Activated CD8-positive, alpha-beta T cell treated with anti-CD3 and anti-CD28 coated beads, Interleukin-2, amount 10 ng/mL, durations not matched to agents 7 days and 5 days (primary cell): ENCODE measurements at regions of chr20 and their contacts with region 1.

Region 1: DNA sequence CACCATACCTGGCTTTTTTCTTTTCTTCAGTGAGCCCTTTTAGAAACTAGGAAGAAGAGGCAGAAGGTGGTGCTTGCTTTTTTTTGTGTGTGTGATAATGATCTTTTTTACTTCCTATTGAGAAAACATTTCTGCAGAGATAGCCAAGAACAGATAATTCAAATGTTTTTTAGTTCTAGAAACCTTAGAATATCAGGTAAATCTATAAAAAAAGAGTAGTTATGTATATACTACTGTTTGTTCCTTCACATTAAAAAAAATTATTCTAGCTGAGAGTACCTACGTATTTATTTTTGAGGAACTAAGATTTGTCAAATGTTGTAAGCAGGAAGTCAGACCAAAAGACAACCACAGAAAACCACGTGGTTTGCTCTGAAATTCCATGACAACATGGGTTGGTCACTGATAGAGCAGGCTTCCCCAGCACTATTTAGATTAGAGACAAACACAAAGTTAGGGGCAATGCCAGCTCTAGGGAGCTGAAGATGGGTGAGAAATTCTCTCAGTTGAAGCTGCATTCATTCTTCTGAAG is 12.8 kb downstream of the STK4 start:
- DNase-seq: peak; percentile 88
- ATAC-seq: peak; percentile 82
- H3K4me3 Mint-ChIP-seq: peak overlapping the region; percentile 74
- H3K27ac Mint-ChIP-seq: peak overlapping the region; percentile 97
- H3K4me1 Mint-ChIP-seq: peaks cover 70% of the 10 kb centered on the region
- H3K27me3 Mint-ChIP-seq: no peaks in the 10 kb centered on the region

Region 2: GRCh38 chr20:44829688-44830087 is 149.5 kb before region 1 on chr20:
- CTCF ChIA-PET with region 1: no interaction called
- POLR2A ChIA-PET with region 1: no interaction called
- DNase-seq: no peak
- ATAC-seq: no peak
- H3K4me3 Mint-ChIP-seq: no peak overlapping the region
- H3K27ac Mint-ChIP-seq: no peak overlapping the region
- H3K4me1 Mint-ChIP-seq: no peaks in the 10 kb centered on the region
- H3K27me3 Mint-ChIP-seq: peaks cover 27% of the 10 kb centered on the region

Region 3: GRCh38 chr20:44942264-44942973 is 36.7 kb before region 1 on chr20:
- CTCF ChIA-PET with region 1: no interaction called
- POLR2A ChIA-PET with region 1: no interaction called
- DNase-seq: no peak
- ATAC-seq: no peak
- H3K4me3 Mint-ChIP-seq: no peak overlapping the region
- H3K27ac Mint-ChIP-seq: no peak overlapping the region
- H3K4me1 Mint-ChIP-seq: peaks cover 1% of the 10 kb centered on the region
- H3K27me3 Mint-ChIP-seq: no peaks in the 10 kb centered on the region

Region 4: DNA sequence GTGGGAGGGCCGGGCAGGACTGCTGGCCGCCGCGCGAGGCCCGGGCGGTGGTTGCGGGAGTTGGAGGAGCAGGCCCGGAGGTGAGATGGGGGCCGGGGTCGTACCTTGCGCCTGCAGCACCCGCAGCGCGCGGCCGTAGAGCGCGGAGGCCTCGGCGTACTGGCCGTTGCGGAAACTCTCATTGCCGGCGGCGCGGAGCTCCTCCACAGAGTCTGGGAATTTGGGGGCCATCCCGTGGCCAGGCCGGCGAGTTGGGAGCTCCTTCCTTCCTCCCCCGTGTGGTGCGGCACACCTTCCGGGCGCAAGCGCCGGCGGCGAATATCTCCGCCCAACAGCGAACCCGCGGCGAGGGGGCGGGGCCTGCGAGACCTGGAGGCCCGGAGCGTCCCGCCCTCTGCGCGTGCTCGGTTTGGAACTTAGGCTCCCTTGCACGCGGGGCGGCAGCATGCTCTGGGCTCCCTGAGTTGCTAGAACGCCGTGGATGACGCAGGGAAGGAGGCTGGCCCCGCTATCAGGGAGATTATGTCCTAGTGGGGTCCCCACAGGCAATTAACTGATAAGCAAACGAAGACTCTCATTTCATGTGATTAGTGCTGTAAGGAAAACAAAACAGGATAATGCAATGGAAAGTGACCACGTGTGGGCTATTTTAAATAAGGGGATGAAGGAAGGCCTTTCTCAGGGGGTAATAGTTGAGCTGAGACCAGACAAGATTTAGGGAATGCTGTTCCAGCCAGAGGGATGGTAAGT is 18.9 kb before region 1 on chr20 and contains the start of gene TOMM34:
- CTCF ChIA-PET with region 1: interaction called, 30 read pairs
- POLR2A ChIA-PET with region 1: interaction called, 14 read pairs
- DNase-seq: peak; percentile 96
- ATAC-seq: peak; percentile 97
- H3K4me3 Mint-ChIP-seq: peak within 1 kb of the TSS; percentile 86
- H3K27ac Mint-ChIP-seq: peak within 1 kb of the TSS; percentile 84
- H3K4me1 Mint-ChIP-seq: peaks cover 71% of the 10 kb centered on the region
- H3K27me3 Mint-ChIP-seq: no peaks in the 10 kb centered on the region
- total RNA-seq, gene TOMM34: 20.2 to 20.3 TPM

Region 5: GRCh38 chr20:44966030-44966961 is 12.9 kb before region 1 on chr20 and contains the start of gene STK4:
- CTCF ChIA-PET with region 1: interaction called, 30 read pairs
- POLR2A ChIA-PET with region 1: interaction called, 46 read pairs
- DNase-seq: peak; percentile 95
- ATAC-seq: peak; percentile 80
- H3K4me3 Mint-ChIP-seq: peak within 1 kb of the TSS; percentile 87
- H3K27ac Mint-ChIP-seq: peak within 1 kb of the TSS; percentile 88
- H3K4me1 Mint-ChIP-seq: peaks cover 67% of the 10 kb centered on the region
- H3K27me3 Mint-ChIP-seq: no peaks in the 10 kb centered on the region
- total RNA-seq, gene STK4: 159 to 164 TPM